ENCODE measurements at regions of chr17 and their contacts with region 1.

Region 1: DNA sequence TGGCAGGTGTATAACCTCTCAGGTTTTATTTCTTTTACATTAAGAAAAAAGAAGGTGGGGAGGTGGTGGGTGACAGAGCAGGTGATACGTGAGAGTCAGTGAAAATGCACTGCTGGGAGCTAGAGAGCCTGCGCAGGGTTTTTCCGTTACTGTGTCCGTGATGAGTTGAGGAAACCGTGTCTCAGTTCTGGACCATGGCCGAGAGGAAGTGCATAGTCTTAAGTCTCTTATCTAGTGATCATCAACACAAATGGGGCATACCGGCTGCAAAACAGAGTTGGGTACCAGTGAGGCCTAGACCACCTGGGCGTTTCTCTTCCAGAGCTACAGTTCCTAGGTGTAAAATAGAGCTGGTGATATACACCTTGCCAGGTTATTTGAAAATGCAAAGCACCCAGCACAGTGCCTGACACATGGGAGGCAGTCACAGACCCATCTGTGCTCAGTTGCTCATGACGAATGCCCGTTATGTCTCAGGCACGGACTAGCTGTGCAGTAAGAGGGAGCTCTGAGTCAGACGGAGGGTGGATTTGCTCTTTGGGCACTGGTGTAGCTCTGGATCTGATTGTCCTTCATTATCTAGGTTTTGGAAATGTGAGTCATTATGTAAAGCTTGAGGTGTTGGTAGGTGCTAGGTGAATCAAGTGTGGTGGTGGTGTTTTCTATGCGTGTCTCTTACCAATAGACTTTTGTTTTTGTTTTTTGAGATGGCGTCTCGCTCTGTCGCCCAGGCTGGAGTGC is 60.9 kb downstream of the RPTOR start:
- DNase-seq: peak; percentile 31
- H3K4me3 Mint-ChIP-seq: no peak overlapping the region
- H3K27ac Mint-ChIP-seq: peak overlapping the region; percentile 35
- H3K4me1 Mint-ChIP-seq: peaks cover 66% of the 10 kb centered on the region
- H3K27me3 Mint-ChIP-seq: peaks cover 2% of the 10 kb centered on the region

Region 2: DNA sequence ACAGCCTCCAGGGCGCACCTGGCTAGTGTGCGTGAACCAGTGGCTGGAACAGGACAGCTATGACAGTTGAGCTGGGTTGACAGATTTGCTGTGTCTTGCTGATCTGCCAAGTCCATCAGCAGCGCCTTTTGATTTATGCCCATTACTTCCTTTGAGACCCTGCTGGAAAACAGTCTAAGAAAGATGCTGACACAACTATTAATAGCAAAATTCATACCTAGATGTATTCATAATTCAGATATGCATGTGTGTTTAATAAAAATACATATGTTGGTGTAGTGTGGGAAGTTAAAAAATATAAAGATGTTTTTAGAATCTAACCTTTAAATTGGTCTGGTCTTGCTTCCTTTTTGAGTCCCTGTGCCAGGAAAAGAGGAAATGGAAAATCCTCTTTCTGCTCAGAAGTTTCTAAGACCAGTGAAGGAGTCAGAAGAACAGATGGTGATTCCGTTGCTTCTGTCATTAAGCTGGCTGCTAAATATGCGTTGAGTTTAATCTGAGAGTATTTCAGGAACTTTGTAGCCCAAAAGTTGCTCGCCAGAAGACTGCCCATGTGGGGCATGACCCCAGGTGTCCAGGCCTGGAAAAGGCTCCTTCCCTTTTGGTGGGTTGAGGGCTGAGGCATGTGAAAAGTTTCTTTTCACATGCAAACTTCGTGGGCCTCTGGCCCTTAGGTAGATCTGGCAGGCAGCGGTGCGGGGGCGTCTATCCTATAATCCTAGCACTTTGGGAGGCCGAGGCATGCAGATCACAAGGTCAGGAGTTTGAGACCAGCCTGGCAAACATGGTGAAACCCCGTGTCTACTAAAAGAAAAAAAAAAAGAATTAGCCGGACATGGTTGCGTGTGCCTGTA is 230.5 kb before region 1 on chr17:
- intact Hi-C with region 1: no loop called
- DNase-seq: no peak
- H3K4me3 Mint-ChIP-seq: no peak overlapping the region
- H3K27ac Mint-ChIP-seq: no peak overlapping the region
- H3K4me1 Mint-ChIP-seq: peaks cover 5% of the 10 kb centered on the region
- H3K27me3 Mint-ChIP-seq: no peaks in the 10 kb centered on the region

Region 3: GRCh38 chr17:80591788-80592187 is 13.7 kb before region 1 on chr17:
- intact Hi-C with region 1: loop called (anchors 2 kb)
- DNase-seq: no peak
- H3K4me3 Mint-ChIP-seq: no peak overlapping the region
- H3K27ac Mint-ChIP-seq: peak overlapping the region; percentile 42
- H3K4me1 Mint-ChIP-seq: peaks cover 69% of the 10 kb centered on the region
- H3K27me3 Mint-ChIP-seq: no peaks in the 10 kb centered on the region

Region 4: GRCh38 chr17:80649678-80650672 is 44.5 kb after region 1 on chr17:
- intact Hi-C with region 1: loop called (anchors 1 kb)
- DNase-seq: peak; percentile 56
- H3K4me3 Mint-ChIP-seq: peak overlapping the region; percentile 68
- H3K27ac Mint-ChIP-seq: peak overlapping the region; percentile 90
- H3K4me1 Mint-ChIP-seq: peaks cover 71% of the 10 kb centered on the region
- H3K27me3 Mint-ChIP-seq: no peaks in the 10 kb centered on the region

Measured in activated T-helper 1 cell treated with anti-CD3 and anti-CD28 coated beads, Interleukin-12 subunit alpha, Interleukin-12 subunit beta, Interleukin-2, Interleukin-4 antibody, amounts not matched to agents 30 ng/mL and 10 ng/mL and 1 ng/mL, durations not matched to agents 14 hours and 24 hours and 36 hours (primary cell).